ENCODE measurements at regions of chr17 and their contacts with region 1.

Region 1: GRCh38 chr17:64547319-64547718 is 40.5 kb downstream of the CEP95 start:
- DNase-seq: no peak
- H3K4me3 ChIP-seq: no peak overlapping the region
- H3K27ac ChIP-seq: no peak overlapping the region; a peak in 1 of 4 replicates
- H3K4me1 ChIP-seq: no peaks in the 10 kb centered on the region
- H3K27me3 ChIP-seq: no peaks in the 10 kb centered on the region
- CTCF ChIP-seq: no peak
- EP300 ChIP-seq: no peak
- RAD21 ChIP-seq: no peak

Region 2: GRCh38 chr17:64527914-64528313 is 19.4 kb before region 1 on chr17:
- CTCF ChIA-PET with region 1: interaction called, 18 read pairs
- POLR2A ChIA-PET with region 1: no interaction called
- DNase-seq: no peak
- H3K4me3 ChIP-seq: no peak overlapping the region
- H3K27ac ChIP-seq: no peak overlapping the region
- H3K4me1 ChIP-seq: no peaks in the 10 kb centered on the region
- H3K27me3 ChIP-seq: no peaks in the 10 kb centered on the region
- CTCF ChIP-seq: no peak
- EP300 ChIP-seq: no peak
- RAD21 ChIP-seq: no peak